Posterior vena cava (tissue), 2 donors: ENCODE measurements at regions of chr1 and their contacts with region 1.

Region 1: DNA sequence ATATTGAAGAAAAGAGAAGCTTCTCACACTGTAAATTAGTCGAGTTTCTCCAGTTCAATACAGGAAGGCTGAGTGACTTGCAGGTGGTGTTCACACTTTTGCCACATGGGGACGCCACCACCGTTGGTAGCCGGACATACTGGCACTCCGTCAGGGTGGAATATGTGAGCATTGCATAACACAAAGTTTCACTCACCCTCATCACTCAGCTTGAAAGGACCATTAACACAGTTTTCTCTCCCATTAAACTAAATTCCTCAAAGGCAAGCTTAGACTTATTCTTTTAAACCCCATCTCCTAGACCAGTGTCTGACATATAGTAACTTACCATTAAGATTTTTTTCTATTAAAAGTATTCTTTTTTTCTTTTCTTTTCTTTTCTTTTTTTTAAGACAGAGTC is 105.3 kb upstream of the SERBP1 start:
- DNase-seq: peak; percentile 93

Region 2: GRCh38 chr1:67500413-67500959 is 35.0 kb before region 1 on chr1:
- intact Hi-C with region 1: no loop called
- DNase-seq: peak; percentile 95

Region 3: DNA sequence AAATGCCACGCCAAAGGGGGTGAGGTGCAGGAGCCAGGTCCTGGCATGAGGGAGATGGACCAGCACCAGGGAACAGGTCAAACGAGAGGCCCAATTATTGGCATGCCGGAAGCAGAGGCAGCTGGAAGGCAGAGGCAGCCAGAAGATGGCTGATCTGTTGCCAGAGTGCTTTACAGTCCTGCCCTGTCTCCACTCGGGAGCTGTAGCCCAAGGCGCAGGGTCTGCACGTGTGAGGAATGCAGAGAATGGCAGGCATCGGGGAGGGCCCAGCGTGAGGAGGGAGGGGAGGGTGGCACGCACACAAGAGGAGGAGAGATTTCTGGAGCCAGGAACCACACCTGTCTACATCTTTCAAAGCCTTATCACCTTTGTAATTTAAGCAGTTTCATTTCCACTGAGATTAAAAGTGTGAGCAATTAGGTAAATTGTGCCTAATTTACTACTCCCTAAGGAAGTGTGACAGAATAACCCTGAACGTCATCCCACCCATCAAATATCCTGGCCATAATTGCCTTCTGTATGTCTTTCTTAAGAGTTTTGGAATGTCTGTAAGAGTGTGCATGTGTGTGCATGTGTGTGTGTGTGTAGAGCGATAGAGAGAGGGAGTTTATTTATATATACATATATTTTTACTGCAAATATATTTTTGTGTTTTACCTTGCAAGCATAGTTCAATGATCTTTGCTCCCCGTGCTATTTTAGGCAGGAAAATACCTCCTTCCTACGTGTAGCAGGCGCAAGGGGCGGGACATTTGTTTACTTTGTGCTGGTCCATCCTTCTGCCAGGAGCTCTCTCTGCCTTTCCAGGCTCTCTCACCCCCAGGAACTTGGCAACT is 20.2 kb after region 1 on chr1:
- intact Hi-C with region 1: loop called in 1 of 2 experiments (anchors 1 kb)
- DNase-seq: no peak

Region 4: DNA sequence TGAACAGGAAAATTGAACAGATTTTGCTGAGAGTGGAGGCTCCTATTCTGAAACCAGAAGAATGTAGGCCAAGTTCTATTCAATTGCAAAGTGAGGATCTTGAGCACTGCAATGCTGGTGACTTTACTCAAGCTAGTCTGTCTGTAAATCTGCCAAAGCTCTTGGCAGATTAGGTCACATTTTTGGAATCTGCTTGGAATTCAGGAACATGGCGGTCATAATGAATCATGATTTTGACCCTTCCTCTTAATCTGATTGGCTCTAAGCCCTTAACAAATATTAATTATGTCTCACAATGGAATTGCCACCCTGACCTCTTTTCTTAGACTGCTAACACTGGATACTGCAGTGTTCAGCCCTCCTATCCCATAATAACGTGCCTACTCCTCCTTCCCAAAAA is 305.0 kb after region 1 on chr1:
- intact Hi-C with region 1: loop called in 1 of 2 experiments (anchors 10 kb)
- DNase-seq: no peak

Region 5: DNA sequence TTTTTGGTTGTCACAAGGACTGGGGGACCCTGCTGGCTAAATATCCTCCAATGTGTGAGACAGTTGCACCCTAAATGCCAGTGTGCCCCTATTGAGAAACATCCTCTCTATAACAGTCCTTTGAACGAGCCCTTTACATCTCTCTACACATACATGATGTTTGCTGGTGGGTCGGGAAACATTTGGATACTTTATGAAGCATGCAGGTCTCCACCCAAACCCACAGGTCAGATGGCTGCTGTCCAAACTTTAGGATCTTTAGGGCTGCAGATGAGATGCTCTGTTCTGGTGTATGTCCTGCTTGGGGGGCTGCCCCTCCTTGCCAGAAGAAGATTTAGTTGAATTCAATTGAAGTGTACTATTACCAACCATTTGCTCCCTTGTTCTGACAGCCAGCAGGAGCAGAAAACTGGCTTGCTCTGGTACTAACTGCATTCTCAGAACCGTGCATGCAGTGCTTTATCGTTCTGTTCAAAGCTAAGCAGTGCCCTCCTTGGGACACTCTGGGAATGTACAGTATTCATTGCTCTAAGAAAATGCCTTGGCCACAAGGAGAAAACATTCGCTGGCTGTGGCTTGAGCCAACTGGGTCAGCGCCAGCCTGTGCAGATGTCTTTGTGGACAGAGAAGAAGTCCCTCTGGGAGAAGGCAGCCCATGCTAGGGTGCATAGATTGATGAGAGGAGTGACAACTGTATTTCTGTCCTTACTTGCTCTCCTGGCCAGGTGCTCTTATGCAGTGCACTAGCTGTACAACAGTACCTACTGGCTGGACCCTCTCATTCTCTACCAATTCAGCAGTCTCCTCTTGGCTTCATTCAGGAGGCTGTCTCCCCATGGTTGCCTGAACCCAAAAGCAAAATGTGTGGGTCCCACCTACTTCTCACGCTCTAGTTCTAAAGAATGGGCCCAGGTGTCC is 576.3 kb after region 1 on chr1:
- intact Hi-C with region 1: loop called in 1 of 2 experiments (anchors 5 kb)
- DNase-seq: peak; percentile 91